Activated naive CD4-positive, alpha-beta T cell treated with anti-CD3 and anti-CD28 coated beads, Interleukin-2, amount 10 ng/mL, durations not matched to agents 7 days and 5 days (primary cell): ENCODE measurements at regions of chr22 and their contacts with region 1.

Region 1: DNA sequence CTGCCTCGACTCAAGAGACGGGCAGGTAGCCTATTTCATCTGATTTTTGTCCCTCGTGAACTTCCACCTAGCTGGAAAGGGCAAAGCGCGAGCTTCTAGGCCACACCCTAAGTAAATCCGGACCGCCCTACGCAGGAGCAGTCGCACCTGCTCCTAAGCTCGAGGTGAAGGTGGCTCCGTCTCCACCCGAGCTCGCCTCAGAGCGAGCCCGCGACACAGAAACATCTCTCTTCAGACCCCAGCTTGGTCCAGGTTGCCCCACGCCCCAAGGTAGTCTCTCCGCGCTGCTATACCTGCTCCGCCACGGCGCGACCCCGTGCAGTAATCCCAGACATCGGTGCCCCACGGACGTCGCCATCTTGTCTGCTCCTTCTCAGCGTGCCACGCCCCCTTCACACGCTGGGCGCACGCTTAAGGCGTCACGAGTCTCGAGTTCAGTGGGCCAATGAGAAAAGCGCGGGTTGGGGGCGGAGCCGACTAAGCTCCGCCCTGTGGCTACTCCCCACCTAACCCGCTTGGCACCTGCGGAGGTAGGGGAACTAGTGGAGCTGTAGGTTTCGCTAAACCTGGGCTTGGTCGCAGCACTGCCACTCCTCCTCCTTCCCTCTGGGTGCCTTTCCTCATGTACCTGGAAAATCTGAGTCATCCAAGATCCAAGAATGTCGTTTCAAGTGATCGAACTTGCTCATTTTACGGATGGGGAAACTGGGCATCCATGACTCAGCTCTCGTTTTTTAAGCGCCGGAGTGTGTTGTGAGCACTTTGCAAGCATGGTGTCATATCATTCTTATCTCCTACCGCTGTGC is at the start of gene PISD:
- DNase-seq: peak; percentile 98
- H3K4me3 Mint-ChIP-seq: peak within 1 kb of the TSS; percentile 99
- H3K27ac Mint-ChIP-seq: peak within 1 kb of the TSS; percentile 96
- H3K4me1 Mint-ChIP-seq: peaks cover 38% of the 10 kb centered on the region
- H3K27me3 Mint-ChIP-seq: peaks cover 3% of the 10 kb centered on the region

Region 2: DNA sequence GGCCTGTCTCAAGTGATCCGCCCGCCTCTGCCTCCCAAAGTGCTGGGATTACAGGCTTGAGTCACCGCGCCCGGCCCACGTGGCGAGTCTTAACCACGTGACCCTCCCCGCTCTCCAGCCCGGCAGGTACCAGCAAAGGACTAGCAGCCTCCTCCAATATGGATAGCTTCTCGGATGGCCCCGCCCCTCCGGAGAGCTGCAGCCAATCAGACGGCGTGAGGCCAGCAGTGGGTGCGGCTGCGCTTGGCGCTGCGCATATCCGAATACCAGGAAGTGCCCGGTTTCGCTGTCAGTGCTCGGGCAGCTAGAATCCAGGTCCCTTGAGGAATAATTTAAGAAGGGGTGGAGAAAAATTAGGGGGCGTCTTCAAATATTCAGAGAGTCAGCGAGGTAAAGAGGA is 14.6 kb after region 1 on chr22:
- CTCF ChIA-PET with region 1: interaction called, 20 read pairs
- DNase-seq: peak; percentile 96
- H3K4me3 Mint-ChIP-seq: peak overlapping the region; percentile 87
- H3K27ac Mint-ChIP-seq: peak overlapping the region; percentile 92
- H3K4me1 Mint-ChIP-seq: peaks cover 20% of the 10 kb centered on the region
- H3K27me3 Mint-ChIP-seq: peaks cover 4% of the 10 kb centered on the region

Region 3: GRCh38 chr22:31944700-31945474 is 282.8 kb after region 1 on chr22:
- CTCF ChIA-PET with region 1: interaction called, 37 read pairs
- DNase-seq: peak; percentile 60
- H3K4me3 Mint-ChIP-seq: no peak overlapping the region
- H3K27ac Mint-ChIP-seq: peak overlapping the region; percentile 79
- H3K4me1 Mint-ChIP-seq: peaks cover 39% of the 10 kb centered on the region
- H3K27me3 Mint-ChIP-seq: no peaks in the 10 kb centered on the region

Region 4: GRCh38 chr22:31952459-31952858 is 290.4 kb after region 1 on chr22:
- CTCF ChIA-PET with region 1: interaction called, 37 read pairs
- DNase-seq: no peak
- H3K4me3 Mint-ChIP-seq: no peak overlapping the region
- H3K27ac Mint-ChIP-seq: no peak overlapping the region
- H3K4me1 Mint-ChIP-seq: peaks cover 77% of the 10 kb centered on the region
- H3K27me3 Mint-ChIP-seq: no peaks in the 10 kb centered on the region

Region 5: GRCh38 chr22:31962392-31963125 is 300.5 kb after region 1 on chr22:
- CTCF ChIA-PET with region 1: interaction called, 11 read pairs
- DNase-seq: no peak
- H3K4me3 Mint-ChIP-seq: no peak overlapping the region
- H3K27ac Mint-ChIP-seq: no peak overlapping the region
- H3K4me1 Mint-ChIP-seq: peaks cover 3% of the 10 kb centered on the region
- H3K27me3 Mint-ChIP-seq: peaks cover 16% of the 10 kb centered on the region

Region 6: DNA sequence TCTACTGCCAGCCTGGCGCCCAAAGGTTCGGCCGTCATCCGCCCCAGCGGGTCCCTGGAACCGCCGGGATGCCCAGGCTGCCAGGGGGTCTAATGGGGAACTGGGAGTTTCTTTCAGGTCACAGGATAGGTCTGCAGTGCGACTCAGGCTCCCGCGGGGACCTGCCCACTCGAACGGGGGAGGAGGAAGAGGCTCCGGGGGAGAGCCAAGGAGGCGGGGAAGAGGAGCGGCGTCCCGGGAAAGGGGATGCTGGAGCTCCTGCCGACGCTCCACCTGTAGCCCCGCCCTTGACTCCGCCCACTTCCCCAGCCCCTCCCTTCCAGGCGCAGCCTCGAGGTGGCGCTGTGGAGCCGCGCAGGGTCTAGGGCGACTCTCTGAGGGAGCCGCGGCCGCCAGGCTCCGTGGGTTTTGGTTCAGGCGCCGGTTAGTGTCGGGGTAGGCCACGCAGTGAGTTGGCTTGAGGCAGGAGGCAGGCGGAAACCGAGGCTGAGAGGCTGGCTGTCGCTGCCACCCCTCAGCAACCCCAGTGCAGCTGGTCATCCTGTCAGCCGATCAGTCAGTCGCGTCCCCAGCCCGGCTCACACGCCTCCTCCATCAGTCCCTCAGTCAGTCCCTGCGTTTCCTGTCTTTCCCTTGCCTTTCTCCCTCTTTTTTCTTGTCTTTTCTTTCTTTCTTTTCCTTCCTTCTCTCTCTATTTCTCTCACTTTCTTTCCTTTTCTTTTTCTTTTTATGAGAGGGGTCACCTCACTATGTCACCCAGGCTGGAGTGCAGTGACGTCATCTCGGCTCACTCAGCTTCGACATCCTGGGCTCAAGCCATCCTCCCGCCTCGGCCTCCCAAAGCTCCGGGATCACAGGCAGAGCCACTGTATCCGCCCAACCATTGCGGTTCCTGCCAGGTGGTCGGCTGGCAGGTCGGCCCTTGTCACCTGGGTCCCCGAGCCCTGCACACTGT is 308.7 kb after region 1 on chr22:
- CTCF ChIA-PET with region 1: interaction called, 55 read pairs
- DNase-seq: peak; percentile 91
- H3K4me3 Mint-ChIP-seq: peak overlapping the region; percentile 55
- H3K27ac Mint-ChIP-seq: no peak overlapping the region
- H3K4me1 Mint-ChIP-seq: peaks cover 13% of the 10 kb centered on the region
- H3K27me3 Mint-ChIP-seq: peaks cover 45% of the 10 kb centered on the region